PC-3 (cell line): ENCODE measurements at regions of chr1 and their contacts with region 1.

Region 1: DNA sequence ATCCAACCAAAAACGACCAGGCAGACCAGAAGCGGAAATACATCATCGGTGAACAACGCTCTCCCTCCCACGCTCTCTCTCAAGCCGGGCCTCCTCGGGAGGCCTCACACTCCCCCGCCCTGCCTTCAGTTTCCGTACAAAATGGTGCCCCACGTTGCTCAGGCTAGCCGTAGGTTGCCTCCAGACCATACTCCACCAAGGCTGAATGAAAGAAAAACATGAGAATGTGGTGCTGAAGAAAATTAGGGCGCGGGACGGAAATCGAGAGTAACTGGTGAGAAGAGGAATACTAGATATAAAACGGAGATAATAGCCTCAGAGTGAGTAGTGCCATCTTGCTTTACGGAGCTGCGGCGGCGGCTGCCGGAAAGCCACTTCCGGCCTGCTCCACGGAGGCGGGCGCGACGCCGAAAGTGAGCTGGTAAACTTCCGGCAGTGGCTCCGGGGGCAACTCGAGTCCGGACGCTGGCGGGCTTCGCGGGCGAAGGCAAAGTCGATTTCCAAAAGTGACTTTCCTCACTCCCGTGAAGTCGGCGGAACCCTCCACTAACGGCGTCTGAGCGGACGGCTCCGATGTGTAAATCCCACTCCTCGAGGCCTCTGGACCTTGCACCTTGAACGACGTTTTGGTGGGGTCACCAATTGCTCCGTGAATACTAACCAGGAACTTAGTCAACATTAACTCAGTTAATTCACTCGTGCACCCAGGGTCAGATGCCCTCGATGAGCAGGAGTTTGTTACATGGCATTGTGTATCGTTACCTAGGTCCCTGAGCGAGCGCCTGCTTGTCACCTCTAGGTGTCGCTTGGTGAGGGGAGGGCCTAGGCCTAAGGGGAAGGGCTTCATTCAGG is at the start of gene SH3BP5L:
- DNase-seq: peak; percentile 99
- ATAC-seq: peak; percentile 71
- H3K4me3 ChIP-seq: peak within 1 kb of the TSS; percentile 73
- H3K27ac ChIP-seq: peak within 1 kb of the TSS; percentile 85
- H3K4me1 ChIP-seq: peaks cover 56% of the 10 kb centered on the region
- H3K27me3 ChIP-seq: no peaks in the 10 kb centered on the region
- CTCF ChIP-seq: peak; percentile 99
- total RNA-seq, gene SH3BP5L: 63.5 and 70.6 TPM in 2 replicates

Region 2: GRCh38 chr1:247210376-247211117 is 1615.6 kb before region 1 on chr1:
- CTCF ChIA-PET with region 1: no interaction called
- POLR2A ChIA-PET with region 1: interaction called, 14 read pairs
- intact Hi-C with region 1: no loop called
- DNase-seq: peak; percentile 100
- ATAC-seq: peak; percentile 98
- H3K4me3 ChIP-seq: peak overlapping the region; percentile 79
- H3K27ac ChIP-seq: peak overlapping the region; percentile 40
- H3K4me1 ChIP-seq: peaks cover 19% of the 10 kb centered on the region
- H3K27me3 ChIP-seq: no peaks in the 10 kb centered on the region
- CTCF ChIP-seq: no peak

Region 3: DNA sequence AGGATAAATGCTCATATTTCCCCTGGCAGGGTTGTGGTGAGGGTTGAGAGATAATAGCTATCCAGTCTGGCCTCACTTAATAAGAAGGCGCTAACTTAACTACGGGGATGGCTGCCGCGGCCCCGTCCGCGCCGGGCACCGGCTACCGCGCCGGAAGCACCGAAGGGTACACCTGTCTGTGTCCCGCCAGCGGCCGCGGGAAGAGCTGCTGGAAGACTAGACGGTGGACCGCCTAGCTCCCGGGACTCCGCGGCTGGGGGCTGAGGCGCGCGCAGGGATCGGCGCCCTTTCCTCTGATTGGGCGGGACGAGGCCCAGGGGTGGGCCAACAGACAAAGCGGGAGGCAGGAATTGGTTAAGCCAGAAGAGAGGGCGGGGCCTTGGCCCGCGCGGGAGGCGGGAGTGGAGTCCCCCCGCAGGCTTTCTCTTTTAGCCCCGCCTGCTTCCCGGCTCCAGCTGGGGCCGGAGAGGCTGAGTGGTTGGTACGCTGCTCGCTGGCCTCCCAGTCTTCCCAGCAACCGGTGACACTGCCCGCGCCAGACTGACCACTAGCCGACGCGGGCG is 11.7 kb after region 1 on chr1 and contains the start of gene ZNF672:
- CTCF ChIA-PET with region 1: interaction called, 12 read pairs
- POLR2A ChIA-PET with region 1: interaction called, 53 read pairs
- intact Hi-C with region 1: loop called (anchors 1 kb)
- DNase-seq: peak; percentile 100
- ATAC-seq: peak; percentile 84
- H3K4me3 ChIP-seq: peak within 1 kb of the TSS; percentile 77
- H3K27ac ChIP-seq: peak within 1 kb of the TSS; percentile 75
- H3K4me1 ChIP-seq: peaks cover 20% of the 10 kb centered on the region
- H3K27me3 ChIP-seq: no peaks in the 10 kb centered on the region
- CTCF ChIP-seq: no peak
- total RNA-seq, gene ZNF672: 83.9 and 89.4 TPM in 2 replicates

Region 4: DNA sequence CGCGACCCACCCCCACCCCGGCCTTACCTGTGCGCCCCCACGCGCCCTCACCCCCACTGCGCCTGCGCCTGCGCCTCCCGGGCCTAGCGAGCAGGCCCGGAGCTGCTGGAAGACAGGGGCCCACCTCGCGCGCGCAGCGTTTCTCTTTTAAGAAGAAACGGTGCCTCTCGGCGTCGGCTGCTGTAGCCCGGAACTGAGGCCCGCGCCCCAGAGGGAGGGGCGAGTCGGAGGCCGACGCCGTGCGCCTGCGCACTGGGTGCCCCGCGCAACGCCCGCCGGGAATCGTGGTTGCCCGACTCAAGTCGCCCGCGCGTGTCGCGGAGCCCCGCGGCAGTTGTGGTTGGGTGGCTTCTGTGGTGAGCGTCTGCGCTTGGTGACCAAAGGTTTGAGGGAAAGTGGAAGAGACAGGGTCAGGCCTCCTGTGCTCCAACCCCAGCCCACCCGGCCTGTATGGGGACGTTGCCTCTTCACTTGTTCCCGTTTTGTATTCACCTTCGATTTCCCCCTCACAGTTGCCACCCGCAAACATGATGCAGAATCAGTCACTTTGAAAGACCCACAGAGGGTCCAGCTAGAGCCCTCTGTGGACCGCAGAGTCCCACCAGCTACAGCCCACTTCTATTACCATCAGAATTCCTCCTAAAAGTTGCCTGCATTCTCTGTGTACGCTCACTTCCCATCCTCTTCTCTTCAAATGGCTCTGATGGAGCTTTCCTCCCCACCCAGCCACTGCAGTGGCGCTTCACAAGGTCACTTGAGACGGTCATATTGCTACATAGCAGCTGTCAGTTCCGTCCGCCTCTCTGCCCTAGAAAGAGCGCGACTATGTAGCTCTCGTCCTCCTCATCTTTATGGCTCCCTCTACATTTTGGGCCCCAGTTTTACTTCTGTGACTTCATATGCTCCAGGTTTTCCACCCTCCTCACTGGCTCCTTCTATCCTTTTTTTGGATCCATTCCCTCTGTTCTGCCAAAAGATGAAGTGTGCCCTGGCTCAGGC is 33.1 kb after region 1 on chr1 and contains the start of gene ZNF692:
- CTCF ChIA-PET with region 1: interaction called, 12 read pairs
- POLR2A ChIA-PET with region 1: no interaction called
- intact Hi-C with region 1: loop called (anchors 1 kb)
- DNase-seq: peak; percentile 100
- ATAC-seq: peak; percentile 78
- H3K4me3 ChIP-seq: peak within 1 kb of the TSS; percentile 75
- H3K27ac ChIP-seq: peak within 1 kb of the TSS; percentile 58
- H3K4me1 ChIP-seq: peaks cover 37% of the 10 kb centered on the region
- H3K27me3 ChIP-seq: no peaks in the 10 kb centered on the region
- CTCF ChIP-seq: no peak
- total RNA-seq, gene ZNF692: 71.9 and 85.4 TPM in 2 replicates

Region 5: GRCh38 chr1:248873409-248873992 is 47.4 kb after region 1 on chr1:
- CTCF ChIA-PET with region 1: interaction called, 5 read pairs
- POLR2A ChIA-PET with region 1: interaction called, 6 read pairs
- intact Hi-C with region 1: loop called (anchors 1 kb)
- DNase-seq: peak; percentile 100
- ATAC-seq: peak; percentile 84
- H3K4me3 ChIP-seq: peak overlapping the region; percentile 75
- H3K27ac ChIP-seq: peak overlapping the region; percentile 47
- H3K4me1 ChIP-seq: peaks cover 9% of the 10 kb centered on the region; the same call in 1 of the 2 replicates
- H3K27me3 ChIP-seq: no peaks in the 10 kb centered on the region
- CTCF ChIP-seq: 0 out of 2 replicates have a peak, but pooled peaks have one; percentile 26

Region 6: GRCh38 chr1:248906009-248906752 is 80.0 kb after region 1 on chr1 and contains the start of gene PGBD2:
- CTCF ChIA-PET with region 1: interaction called, 8 read pairs
- POLR2A ChIA-PET with region 1: no interaction called
- intact Hi-C with region 1: loop called (anchors 1 kb)
- DNase-seq: peak; percentile 96
- ATAC-seq: peak; percentile 86
- H3K4me3 ChIP-seq: peak within 1 kb of the TSS; percentile 81
- H3K27ac ChIP-seq: peak within 1 kb of the TSS; percentile 46; the same call in 1 of the 2 replicates
- H3K4me1 ChIP-seq: peaks cover 12% of the 10 kb centered on the region; the same call in 1 of the 2 replicates
- H3K27me3 ChIP-seq: peaks cover 4% of the 10 kb centered on the region; the same call in 1 of the 2 replicates
- CTCF ChIP-seq: peak; percentile 85
- total RNA-seq, gene PGBD2: 6.5 and 9.2 TPM in 2 replicates

Region 7: GRCh38 chr1:248924696-248925532 is 98.8 kb after region 1 on chr1:
- CTCF ChIA-PET with region 1: interaction called, 11 read pairs
- POLR2A ChIA-PET with region 1: no interaction called
- intact Hi-C with region 1: no loop called
- DNase-seq: peak; percentile 77
- ATAC-seq: peak; percentile 97
- H3K4me3 ChIP-seq: no peak overlapping the region
- H3K27ac ChIP-seq: peak overlapping the region; percentile 89; the same call in 1 of the 2 replicates
- H3K4me1 ChIP-seq: peaks cover 29% of the 10 kb centered on the region
- H3K27me3 ChIP-seq: no peaks in the 10 kb centered on the region
- CTCF ChIP-seq: peak; percentile 92